Cardiac septum (tissue), 1 donor: ENCODE measurements at regions of chr3 and their contacts with region 1.

Region 1: DNA sequence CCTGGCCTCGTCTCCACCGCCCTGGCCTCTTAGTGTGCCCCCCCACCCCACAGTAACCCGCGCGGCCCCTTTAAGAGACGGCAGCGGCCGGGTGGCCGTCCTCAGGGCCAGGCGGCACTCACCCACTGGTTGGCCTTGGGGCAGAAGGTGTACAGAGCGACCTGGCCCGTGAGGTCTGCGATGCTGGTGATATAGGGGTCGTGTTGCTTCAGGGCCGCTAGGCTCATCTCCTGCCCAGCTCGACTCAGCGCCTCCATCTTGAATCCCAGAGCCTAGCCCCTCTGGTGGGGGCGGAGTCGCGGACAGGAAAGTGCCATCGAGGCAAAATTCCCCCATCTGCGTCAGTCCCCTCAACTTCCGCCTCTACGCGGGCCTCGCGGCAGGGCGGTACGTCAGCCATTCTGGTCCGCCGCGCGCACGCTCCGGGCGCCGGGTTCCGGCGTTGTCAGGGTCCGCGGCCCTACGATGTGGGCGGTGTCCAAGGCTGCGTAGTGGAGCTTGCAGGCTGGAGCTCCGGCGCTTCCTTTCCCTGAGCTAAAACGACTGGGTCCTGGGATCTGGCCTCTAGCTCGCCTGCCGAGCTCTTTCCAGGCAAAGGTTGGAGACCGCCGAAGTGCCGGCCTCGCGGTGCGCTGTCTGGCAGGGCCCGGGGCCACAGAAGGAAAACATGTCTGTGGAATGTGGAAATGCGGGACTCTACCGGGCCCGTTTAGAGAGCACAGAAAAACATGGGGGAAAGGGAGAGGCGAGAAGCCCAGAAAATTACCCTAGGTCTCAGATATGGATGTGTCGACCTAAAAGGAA is at the start of gene DCP1A:
- DNase-seq: peak; percentile 97
- total RNA-seq, gene DCP1A: 17.3 TPM

Region 2: GRCh38 chr3:53255775-53256703 is 91.4 kb before region 1 on chr3 and contains the start of gene TKT:
- intact Hi-C with region 1: loop called (anchors 5 kb)
- DNase-seq: peak; percentile 95
- total RNA-seq, gene TKT: 34.6 TPM

Region 3: DNA sequence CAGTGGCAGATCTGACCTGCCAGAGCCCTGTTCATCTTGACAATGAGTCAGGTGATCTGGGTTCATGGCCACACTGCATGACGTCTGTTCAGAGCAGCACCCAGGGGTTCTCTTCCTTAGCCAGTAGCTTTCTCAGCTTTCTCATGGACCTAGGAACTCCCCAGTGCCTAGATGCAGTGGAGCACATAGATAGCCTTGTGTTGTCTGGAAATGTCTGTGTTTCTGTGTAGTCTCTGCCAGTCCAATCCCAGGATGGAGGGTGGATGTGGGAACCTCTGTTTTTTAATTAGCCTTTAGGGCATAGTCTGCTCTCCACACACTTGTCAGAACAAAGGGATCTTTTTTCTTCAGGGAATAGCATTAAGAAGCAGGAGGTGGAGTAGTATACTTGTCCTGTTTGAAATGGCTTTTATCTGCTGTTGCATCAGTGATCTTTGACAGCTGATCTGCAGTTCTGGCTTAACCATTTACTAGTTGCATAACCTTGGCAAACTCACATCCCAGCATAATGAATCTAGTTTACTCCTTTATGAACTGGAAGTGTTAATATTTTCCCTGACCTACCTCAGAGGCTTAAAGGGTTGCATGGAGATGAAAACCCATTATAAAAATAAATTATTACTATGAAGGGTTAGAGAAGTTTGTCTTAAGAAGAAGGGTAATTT is 130.8 kb after region 1 on chr3:
- intact Hi-C with region 1: no loop called
- DNase-seq: no peak

Region 4: DNA sequence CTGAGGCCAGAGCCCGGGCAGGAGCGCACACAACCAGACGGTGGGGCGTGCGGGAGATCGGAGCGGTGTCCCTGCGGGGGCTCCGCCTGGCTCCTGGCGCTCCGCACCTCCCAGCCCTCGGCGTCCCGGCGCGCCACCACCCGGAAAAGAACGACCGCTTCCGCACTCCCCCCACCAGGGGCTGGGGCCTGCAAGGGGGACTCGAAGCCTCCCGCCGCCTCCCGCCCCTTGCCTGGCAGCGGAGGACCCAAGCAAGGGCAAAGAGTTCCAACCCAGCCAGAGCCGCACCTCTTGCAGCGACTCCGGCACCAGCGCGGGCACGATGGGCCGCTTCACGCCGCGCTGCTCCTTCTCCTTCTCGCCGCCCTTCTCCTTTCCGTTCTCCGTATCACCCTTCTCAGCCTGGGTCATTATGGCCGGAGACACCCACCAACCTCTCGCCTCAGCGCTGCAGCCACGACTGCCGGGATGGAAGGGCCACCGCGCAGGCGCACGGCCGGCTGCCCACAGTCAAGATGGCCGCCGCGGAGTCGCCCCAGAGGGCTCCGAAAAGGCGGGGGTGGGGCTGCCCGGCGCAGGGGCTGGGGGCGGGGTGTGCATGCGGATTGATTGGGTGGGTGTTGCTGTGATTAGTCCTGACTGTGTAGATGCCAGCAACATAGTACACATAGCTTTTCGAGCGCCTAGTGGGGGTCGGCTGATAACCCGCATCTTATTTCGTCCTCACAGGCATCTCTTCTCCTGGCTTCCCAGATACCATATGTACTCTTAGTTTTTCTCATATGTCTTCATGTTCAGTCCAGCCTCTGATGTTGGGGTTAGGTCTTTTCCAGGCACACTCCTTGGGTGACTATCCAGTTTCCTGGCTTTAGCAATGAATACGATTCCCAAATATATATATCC is 534.5 kb after region 1 on chr3 and contains the start of gene ACTR8:
- intact Hi-C with region 1: loop called (anchors 5 kb)
- DNase-seq: peak; percentile 95
- total RNA-seq, gene ACTR8: 33.1 TPM